ENCODE measurements at regions of chr1 and their contacts with region 1.

Region 1: GRCh38 chr1:43227143-43227764 is 42.5 kb upstream of the TMEM125 start:
- DNase-seq: peak; percentile 78
- H3K4me3 ChIP-seq: no peak overlapping the region
- H3K27ac ChIP-seq: no peak overlapping the region
- H3K4me1 ChIP-seq: peaks cover 7% of the 10 kb centered on the region
- H3K27me3 ChIP-seq: no peaks in the 10 kb centered on the region
- CTCF ChIP-seq: peak; percentile 84 to 97
- POLR2A ChIP-seq: no peak

Region 2: DNA sequence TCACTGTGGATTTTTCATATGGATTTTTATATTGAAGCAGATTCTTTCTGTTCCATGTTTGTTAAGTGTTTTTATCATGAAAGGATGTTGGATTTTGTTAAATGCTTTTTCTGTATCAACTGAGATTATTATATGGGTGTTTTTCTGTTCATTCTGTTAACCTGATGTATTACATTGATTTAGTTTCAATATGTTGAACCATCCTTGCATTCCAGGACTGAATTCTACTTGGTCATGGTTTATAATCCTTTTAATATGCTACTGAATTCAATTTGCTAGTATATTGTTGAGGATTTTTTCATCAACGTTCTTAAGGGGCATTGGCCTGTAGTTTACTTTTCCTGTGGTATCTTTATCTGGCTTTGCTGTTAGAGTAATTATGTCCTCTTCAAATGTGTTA is 708.3 kb before region 1 on chr1:
- CTCF ChIA-PET with region 1: no interaction called
- POLR2A ChIA-PET with region 1: no interaction called
- dilution Hi-C with region 1: no loop called
- intact Hi-C with region 1: no loop called
- DNase-seq: no peak
- H3K4me3 ChIP-seq: no peak overlapping the region
- H3K27ac ChIP-seq: no peak overlapping the region
- H3K4me1 ChIP-seq: no peaks in the 10 kb centered on the region
- H3K27me3 ChIP-seq: no peaks in the 10 kb centered on the region
- CTCF ChIP-seq: no peak
- POLR2A ChIP-seq: no peak

Region 3: GRCh38 chr1:42913426-42914091 is 313.7 kb before region 1 on chr1:
- CTCF ChIA-PET with region 1: interaction called, 13 read pairs
- POLR2A ChIA-PET with region 1: no interaction called
- dilution Hi-C with region 1: no loop called
- intact Hi-C with region 1: no loop called
- DNase-seq: peak; percentile 85
- H3K4me3 ChIP-seq: no peak overlapping the region
- H3K27ac ChIP-seq: no peak overlapping the region
- H3K4me1 ChIP-seq: no peaks in the 10 kb centered on the region
- H3K27me3 ChIP-seq: peaks cover 4% of the 10 kb centered on the region in 2 experiments
- CTCF ChIP-seq: peak; percentile 62 to 75
- POLR2A ChIP-seq: no peak

Region 4: GRCh38 chr1:43214501-43215444 is 12.5 kb before region 1 on chr1:
- CTCF ChIA-PET with region 1: interaction called, 17 read pairs
- POLR2A ChIA-PET with region 1: no interaction called
- dilution Hi-C with region 1: no loop called
- intact Hi-C with region 1: no loop called
- DNase-seq: no peak
- H3K4me3 ChIP-seq: no peak overlapping the region
- H3K27ac ChIP-seq: no peak overlapping the region
- H3K4me1 ChIP-seq: peaks cover 4% of the 10 kb centered on the region
- H3K27me3 ChIP-seq: no peaks in the 10 kb centered on the region
- CTCF ChIP-seq: no peak
- POLR2A ChIP-seq: no peak

Region 5: DNA sequence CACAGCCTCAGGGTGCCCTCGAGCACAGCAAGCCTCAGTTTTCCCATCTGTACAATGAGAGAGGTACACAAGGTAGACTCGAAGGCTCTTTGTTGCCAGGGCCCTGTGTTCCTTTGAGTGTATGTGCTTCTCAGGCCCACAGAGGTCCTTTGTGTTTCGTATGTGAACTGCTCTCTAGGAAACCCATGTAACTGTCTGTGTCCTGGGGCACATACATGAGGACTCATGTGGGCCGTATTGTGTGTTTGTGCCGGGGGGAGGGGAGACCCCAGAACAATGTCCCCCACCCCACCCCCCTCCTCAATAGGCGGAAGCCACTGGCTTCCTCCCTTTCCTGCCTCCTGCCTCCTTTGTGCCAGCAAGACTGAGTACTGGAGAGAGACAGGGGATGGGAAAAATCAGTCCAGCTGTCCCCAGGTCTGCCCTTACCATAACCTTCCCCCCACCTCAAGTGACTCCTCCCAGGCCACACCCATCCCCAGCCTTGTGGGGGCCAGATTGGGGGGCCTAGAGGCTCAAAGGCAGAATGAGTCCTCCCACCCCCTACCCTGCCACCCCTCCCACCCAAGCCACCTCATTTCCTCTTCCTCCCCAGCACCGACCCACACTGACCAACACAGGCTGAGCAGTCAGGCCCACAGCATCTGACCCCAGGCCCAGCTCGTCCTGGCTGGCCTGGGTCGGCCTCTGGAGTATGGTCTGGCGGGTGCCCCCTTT is 73.3 kb after region 1 on chr1 and contains the start of gene TIE1:
- CTCF ChIA-PET with region 1: interaction called, 14 read pairs
- POLR2A ChIA-PET with region 1: interaction called, 5 read pairs
- dilution Hi-C with region 1: no loop called
- intact Hi-C with region 1: no loop called
- DNase-seq: peak; percentile 94
- H3K4me3 ChIP-seq: peak within 1 kb of the TSS; percentile 47 to 96 (median 76)
- H3K27ac ChIP-seq: peak within 1 kb of the TSS; percentile 84
- H3K4me1 ChIP-seq: peaks cover 45% of the 10 kb centered on the region
- H3K27me3 ChIP-seq: no peaks in the 10 kb centered on the region
- CTCF ChIP-seq: no peak
- POLR2A ChIP-seq: peak; percentile 98
- total RNA-seq, gene TIE1: 562 and 620 TPM in 2 replicates

Region 6: GRCh38 chr1:43367904-43368645 is 140.8 kb after region 1 on chr1 and contains the start of gene ELOVL1:
- CTCF ChIA-PET with region 1: interaction called, 5 read pairs
- POLR2A ChIA-PET with region 1: interaction called, 4 read pairs
- dilution Hi-C with region 1: no loop called
- intact Hi-C with region 1: loop called (anchors 5 kb)
- DNase-seq: peak; percentile 89
- H3K4me3 ChIP-seq: peak within 1 kb of the TSS; percentile 70 to 85 (median 72)
- H3K27ac ChIP-seq: peak within 1 kb of the TSS; percentile 57
- H3K4me1 ChIP-seq: peaks cover 30% of the 10 kb centered on the region
- H3K27me3 ChIP-seq: no peaks in the 10 kb centered on the region
- CTCF ChIP-seq: peak in 1 of 2 donors; percentile 38
- POLR2A ChIP-seq: peak; percentile 98
- total RNA-seq, gene ELOVL1: 126 and 134 TPM in 2 replicates

Region 7: DNA sequence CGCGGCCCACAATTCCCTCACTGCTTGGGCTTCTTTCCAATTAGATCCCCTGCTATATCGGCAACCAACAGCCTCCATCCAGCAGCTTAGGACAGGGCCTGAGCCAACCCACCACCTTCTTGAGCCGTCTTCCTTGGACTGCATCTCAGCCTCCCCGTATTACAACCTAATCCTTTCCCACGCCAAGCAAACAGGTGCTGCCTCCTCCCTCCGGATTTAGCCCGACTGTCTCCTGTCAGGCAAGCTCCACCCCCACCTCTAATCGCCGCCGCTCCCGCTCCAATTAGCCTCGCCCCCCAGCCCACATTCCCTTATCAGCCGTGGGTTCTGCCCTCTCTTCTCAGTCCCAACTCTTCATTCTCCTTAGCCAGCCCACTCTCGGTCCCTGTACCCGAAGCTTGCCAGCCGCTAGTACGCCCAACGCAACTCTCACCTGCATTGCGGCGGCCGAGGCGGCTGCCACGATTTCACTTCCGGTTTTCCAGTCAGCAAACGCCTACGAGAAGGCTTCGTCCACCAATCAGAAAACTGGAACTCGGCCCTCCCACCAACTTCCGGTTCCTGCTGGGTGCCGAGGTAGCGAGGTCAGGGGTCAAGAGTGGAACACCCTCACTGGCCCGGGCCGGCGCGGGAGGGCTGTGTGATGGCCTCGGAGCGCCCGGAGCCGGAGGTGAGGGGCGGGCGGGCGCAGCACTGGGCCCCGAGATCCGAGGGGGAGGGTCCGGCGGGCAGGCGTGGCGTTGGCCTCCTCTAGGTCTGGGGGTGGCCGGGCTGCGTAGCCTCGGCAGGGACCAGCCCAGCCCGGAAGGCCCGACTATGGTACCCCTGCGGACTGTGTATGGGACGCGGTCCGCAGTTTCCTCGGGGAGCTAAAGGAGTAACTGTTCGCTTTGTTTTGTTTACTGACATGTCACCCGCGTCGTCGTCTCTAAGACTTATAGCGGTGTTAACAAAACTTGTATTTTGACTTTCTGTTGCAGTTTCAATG is 162.4 kb after region 1 on chr1 and contains the starts of genes MED8 and SZT2:
- CTCF ChIA-PET with region 1: interaction called, 34 read pairs
- POLR2A ChIA-PET with region 1: no interaction called
- dilution Hi-C with region 1: no loop called
- intact Hi-C with region 1: no loop called
- DNase-seq: peak; percentile 97
- H3K4me3 ChIP-seq: peak within 1 kb of the TSS; percentile 83 to 98 (median 96)
- H3K27ac ChIP-seq: peak within 1 kb of the TSS; percentile 70
- H3K4me1 ChIP-seq: peaks cover 18% of the 10 kb centered on the region
- H3K27me3 ChIP-seq: no peaks in the 10 kb centered on the region
- CTCF ChIP-seq: no peak
- POLR2A ChIP-seq: peak; percentile 83
- total RNA-seq, gene MED8: 41.9 and 45.6 TPM in 2 replicates
- total RNA-seq, gene SZT2: 49.9 and 50.3 TPM in 2 replicates

Measured in endothelial cell of umbilical vein (primary cell).